Activated CD8-positive, alpha-beta T cell treated with anti-CD3 and anti-CD28 coated beads for 36 hours (primary cell): ENCODE measurements at regions of chr4 and their contacts with region 1.

Region 1: DNA sequence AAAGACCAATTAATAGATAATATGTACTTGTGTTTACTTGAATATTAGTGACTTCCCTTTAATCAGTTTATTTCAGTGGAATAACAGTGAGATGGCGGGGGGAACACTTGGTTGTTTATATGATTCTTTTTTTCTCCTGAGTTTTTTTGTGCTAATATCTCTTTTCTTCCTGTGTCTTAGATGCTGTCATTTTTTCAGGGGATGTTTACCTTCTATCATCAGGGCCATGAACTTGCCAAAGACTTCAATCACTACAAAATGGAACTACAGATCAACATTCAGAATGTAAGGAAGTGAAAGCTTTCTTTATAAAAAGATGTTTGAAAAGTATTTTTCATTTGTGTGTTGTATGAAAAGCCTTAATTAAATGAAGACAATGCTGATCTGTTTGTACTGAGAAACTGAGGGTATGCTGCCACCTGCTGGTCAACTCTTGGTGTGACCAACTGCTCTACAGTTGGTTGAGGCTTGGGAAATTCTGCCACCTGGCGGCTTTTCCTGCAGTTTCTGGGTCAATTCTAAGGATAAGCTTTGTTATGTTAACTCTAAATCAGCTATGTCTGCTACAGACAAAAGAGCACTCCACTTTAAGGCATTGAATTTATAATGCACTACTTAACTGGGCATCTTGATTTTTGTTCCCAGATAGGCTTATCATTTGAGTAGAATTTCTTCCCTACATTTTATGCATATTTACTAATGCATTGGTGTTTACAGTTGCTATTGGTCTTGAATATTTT is 134.8 kb downstream of the ARHGAP10 start:
- DNase-seq: peak; percentile 97
- ATAC-seq: peak; percentile 95
- H3K4me3 Mint-ChIP-seq: no peak overlapping the region
- H3K27ac Mint-ChIP-seq: no peak overlapping the region
- H3K4me1 Mint-ChIP-seq: no peaks in the 10 kb centered on the region
- H3K27me3 Mint-ChIP-seq: no peaks in the 10 kb centered on the region
- CTCF ChIP-seq: peak; percentile 99

Region 2: GRCh38 chr4:147629783-147630730 is 236.6 kb before region 1 on chr4:
- CTCF ChIA-PET with region 1: interaction called, 24 read pairs
- POLR2A ChIA-PET with region 1: no interaction called
- intact Hi-C with region 1: no loop called
- DNase-seq: no peak
- ATAC-seq: no peak
- H3K4me3 Mint-ChIP-seq: no peak overlapping the region
- H3K27ac Mint-ChIP-seq: no peak overlapping the region
- H3K4me1 Mint-ChIP-seq: peaks cover 2% of the 10 kb centered on the region
- H3K27me3 Mint-ChIP-seq: no peaks in the 10 kb centered on the region
- CTCF ChIP-seq: no peak

Region 3: GRCh38 chr4:147696863-147697262 is 169.8 kb before region 1 on chr4:
- CTCF ChIA-PET with region 1: interaction called, 180 read pairs
- POLR2A ChIA-PET with region 1: no interaction called
- intact Hi-C with region 1: no loop called
- DNase-seq: no peak
- ATAC-seq: no peak
- H3K4me3 Mint-ChIP-seq: no peak overlapping the region
- H3K27ac Mint-ChIP-seq: no peak overlapping the region
- H3K4me1 Mint-ChIP-seq: no peaks in the 10 kb centered on the region
- H3K27me3 Mint-ChIP-seq: peaks cover 6% of the 10 kb centered on the region
- CTCF ChIP-seq: no peak

Region 4: DNA sequence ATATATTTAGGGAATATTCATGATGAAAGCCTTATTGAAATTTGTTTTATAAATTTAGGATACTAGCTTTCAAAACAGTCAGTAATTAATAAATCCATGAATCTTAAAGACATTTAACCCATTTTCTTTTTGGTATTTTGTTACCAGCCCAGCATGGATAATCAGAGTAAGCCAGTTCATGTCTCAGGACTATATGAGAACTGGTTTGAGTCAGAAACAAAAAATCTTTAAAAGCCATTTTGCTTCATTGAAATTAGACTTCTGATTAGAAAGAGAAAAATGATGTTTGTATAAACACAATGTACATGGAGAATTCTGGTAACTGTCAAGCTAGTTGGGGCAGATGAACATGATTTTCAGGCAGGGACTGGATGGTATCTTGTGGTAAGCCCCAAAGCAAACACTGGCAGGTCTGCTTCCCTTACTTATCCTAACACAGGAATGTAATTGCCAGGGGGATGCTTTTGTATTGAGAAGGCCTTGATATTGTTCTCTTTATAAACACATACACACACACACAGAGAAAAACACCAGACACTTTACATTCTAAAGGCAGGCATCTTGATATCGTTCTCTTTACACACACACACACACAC is 125.4 kb before region 1 on chr4:
- CTCF ChIA-PET with region 1: interaction called, 39 read pairs
- POLR2A ChIA-PET with region 1: no interaction called
- intact Hi-C with region 1: no loop called
- DNase-seq: no peak
- ATAC-seq: no peak
- H3K4me3 Mint-ChIP-seq: no peak overlapping the region
- H3K27ac Mint-ChIP-seq: no peak overlapping the region
- H3K4me1 Mint-ChIP-seq: peaks cover 9% of the 10 kb centered on the region
- H3K27me3 Mint-ChIP-seq: no peaks in the 10 kb centered on the region
- CTCF ChIP-seq: no peak

Region 5: GRCh38 chr4:147816382-147817254 is 50.1 kb before region 1 on chr4:
- CTCF ChIA-PET with region 1: interaction called, 11 read pairs
- POLR2A ChIA-PET with region 1: no interaction called
- intact Hi-C with region 1: no loop called
- DNase-seq: no peak
- ATAC-seq: no peak
- H3K4me3 Mint-ChIP-seq: no peak overlapping the region
- H3K27ac Mint-ChIP-seq: no peak overlapping the region
- H3K4me1 Mint-ChIP-seq: peaks cover 11% of the 10 kb centered on the region
- H3K27me3 Mint-ChIP-seq: no peaks in the 10 kb centered on the region
- CTCF ChIP-seq: no peak

Region 6: DNA sequence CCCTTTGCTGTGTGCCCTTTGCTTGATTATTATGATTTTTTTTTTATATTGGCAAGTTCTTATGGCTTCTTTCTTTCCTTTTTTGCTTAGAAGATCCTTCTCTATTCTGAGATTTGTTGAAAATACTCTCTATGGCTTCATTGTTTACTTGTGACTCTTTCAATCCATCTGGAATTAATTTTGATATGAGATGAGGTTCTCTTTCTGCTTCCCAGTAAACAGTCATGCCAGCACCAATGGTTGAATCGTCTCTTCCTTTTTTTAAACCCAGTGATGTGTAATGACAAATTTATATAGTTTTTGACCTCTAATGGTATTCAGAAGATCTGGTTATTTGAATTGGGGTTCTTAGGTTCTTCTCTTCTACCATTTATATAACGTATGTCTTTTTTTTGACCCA is 13.0 kb before region 1 on chr4:
- CTCF ChIA-PET with region 1: interaction called, 103 read pairs
- POLR2A ChIA-PET with region 1: no interaction called
- intact Hi-C with region 1: no loop called
- DNase-seq: no peak
- ATAC-seq: no peak
- H3K4me3 Mint-ChIP-seq: no peak overlapping the region
- H3K27ac Mint-ChIP-seq: no peak overlapping the region
- H3K4me1 Mint-ChIP-seq: no peaks in the 10 kb centered on the region
- H3K27me3 Mint-ChIP-seq: no peaks in the 10 kb centered on the region
- CTCF ChIP-seq: no peak

Region 7: DNA sequence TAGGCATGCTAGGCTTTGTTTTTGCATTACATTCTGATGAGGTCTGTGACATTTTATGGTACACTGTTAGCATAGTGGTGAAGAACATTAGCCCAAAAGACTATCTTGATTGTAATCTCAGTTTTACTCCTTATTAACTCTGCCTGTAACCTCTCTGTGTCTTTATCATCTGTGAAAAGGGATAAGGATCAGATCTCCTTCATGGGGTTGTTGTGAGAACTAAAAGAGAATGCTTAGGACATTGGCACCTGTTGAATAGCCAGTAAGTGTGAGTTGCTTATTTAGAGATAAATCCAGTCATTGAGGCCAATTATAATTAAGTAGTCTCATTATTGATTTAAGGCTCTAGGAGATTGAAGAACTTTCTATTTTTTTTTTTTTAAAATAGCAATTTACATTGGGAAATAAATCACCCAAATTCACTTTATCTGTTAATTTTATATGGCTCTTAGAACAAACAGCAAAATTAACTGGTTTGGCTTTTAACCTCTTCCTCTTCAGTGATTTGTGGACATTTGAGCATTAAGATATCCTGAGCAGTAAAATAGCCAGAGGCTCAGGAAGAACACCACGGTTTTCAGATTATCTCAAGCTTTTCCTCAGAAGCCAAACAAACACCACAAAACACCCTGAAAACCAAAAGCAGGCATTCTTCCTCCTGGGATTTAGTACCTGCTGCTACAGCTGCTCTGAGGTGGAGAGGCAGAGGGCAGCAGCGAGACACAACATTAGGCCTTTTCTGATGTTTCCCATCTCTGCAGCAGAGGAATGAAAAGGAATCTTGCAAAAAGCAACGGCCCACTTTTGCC is 58.1 kb after region 1 on chr4:
- CTCF ChIA-PET with region 1: interaction called, 10 read pairs
- POLR2A ChIA-PET with region 1: no interaction called
- intact Hi-C with region 1: no loop called
- DNase-seq: peak; percentile 14
- ATAC-seq: no peak
- H3K4me3 Mint-ChIP-seq: no peak overlapping the region
- H3K27ac Mint-ChIP-seq: no peak overlapping the region
- H3K4me1 Mint-ChIP-seq: peaks cover 3% of the 10 kb centered on the region
- H3K27me3 Mint-ChIP-seq: no peaks in the 10 kb centered on the region
- CTCF ChIP-seq: peak; percentile 17

Region 8: DNA sequence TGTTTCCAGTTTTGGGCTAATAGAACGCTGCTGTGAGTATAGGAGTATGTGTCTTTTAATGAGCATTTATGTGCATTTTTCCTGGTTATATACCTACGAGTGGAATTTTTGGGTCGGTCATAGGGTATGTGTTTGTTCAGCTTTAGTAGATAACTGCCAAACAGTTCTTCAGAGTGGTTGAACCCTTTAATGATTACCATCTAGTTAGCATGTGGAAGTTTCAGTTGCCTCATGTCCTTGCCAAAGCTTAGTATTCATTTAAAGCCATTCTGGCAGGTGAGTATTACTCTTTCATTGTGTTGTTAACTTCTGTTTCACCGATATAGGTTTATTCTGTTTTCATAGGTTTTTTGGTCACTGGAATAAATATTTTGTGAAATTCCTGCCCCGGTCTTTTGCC is 94.3 kb after region 1 on chr4:
- CTCF ChIA-PET with region 1: no interaction called
- POLR2A ChIA-PET with region 1: no interaction called
- intact Hi-C with region 1: no loop called
- DNase-seq: no peak
- ATAC-seq: no peak
- H3K4me3 Mint-ChIP-seq: no peak overlapping the region
- H3K27ac Mint-ChIP-seq: no peak overlapping the region
- H3K4me1 Mint-ChIP-seq: no peaks in the 10 kb centered on the region
- H3K27me3 Mint-ChIP-seq: no peaks in the 10 kb centered on the region
- CTCF ChIP-seq: no peak

Region 9: DNA sequence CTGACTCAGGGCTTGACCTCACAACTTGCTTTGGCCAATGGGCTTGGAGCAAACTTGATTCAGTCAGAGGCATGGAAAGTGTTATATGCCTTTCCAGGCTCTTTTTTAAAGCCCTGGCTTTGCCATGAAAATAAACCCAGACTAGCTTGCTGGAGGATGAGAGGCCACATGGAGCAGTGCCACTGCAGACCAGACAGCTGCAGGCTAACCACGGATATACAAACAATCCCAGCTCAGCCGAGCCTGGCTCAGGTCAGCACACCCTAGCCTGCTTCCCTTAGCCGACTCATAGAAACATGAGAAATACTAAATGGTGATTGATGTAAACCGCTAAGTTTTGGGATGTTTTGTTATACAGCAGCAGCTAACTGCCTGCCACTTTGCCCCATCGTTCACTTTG is 210.3 kb after region 1 on chr4:
- CTCF ChIA-PET with region 1: no interaction called
- POLR2A ChIA-PET with region 1: no interaction called
- intact Hi-C with region 1: no loop called
- DNase-seq: no peak
- ATAC-seq: no peak
- H3K4me3 Mint-ChIP-seq: no peak overlapping the region
- H3K27ac Mint-ChIP-seq: no peak overlapping the region
- H3K4me1 Mint-ChIP-seq: no peaks in the 10 kb centered on the region
- H3K27me3 Mint-ChIP-seq: no peaks in the 10 kb centered on the region
- CTCF ChIP-seq: no peak

Region 10: GRCh38 chr4:148315049-148315448 is 448.3 kb after region 1 on chr4:
- CTCF ChIA-PET with region 1: no interaction called
- POLR2A ChIA-PET with region 1: no interaction called
- intact Hi-C with region 1: no loop called
- DNase-seq: peak; percentile 26
- ATAC-seq: no peak
- H3K4me3 Mint-ChIP-seq: no peak overlapping the region
- H3K27ac Mint-ChIP-seq: no peak overlapping the region
- H3K4me1 Mint-ChIP-seq: peaks cover 12% of the 10 kb centered on the region
- H3K27me3 Mint-ChIP-seq: no peaks in the 10 kb centered on the region
- CTCF ChIP-seq: no peak